ENCODE measurements at regions of chr11 and their contacts with region 1.

Region 1: DNA sequence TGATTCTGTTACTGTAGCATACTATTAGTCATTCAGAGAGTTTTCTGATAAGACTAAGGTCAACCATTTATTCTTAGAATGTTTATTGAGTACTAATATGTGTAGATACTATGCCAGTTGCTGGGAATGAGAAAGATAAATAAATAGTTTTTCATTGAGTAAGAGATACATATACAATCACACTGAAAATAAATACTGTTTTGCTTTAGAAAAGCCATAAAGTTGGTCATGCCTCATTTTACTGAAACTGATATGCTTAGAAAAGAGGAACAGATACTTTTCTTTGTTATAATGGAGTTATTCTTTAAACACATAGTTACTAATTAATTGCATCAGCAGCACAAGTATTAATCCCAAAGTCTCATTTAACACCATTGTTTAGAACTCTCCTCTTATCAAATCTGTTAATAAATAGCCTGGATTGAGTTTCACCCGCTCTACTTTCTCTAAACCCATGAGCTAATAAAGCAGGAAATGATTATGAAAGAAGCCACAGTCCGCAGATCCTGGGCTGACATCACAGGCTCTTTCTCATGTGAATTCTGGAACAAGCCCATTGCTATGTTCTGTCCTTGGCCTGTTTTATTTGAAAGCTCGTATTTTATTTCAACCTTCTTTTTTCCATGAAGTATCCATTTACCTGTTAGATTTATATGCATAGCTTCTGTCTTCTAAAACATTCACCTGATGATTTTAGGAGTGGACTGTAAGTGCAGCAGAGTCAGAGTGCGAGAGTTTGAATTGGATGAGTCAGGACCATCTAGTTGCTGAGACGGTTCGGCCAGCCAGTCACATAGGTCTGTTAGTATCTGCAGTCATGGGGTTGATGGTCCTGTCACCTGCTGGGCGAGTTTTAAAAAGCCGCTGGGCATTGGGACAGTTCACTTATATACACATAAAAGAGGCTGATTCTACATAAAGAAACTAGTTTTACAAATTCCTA is 35.5 kb downstream of the PIWIL4 start:
- DNase-seq: peak; percentile 12
- H3K4me3 Mint-ChIP-seq: no peak overlapping the region
- H3K27ac Mint-ChIP-seq: no peak overlapping the region
- H3K4me1 Mint-ChIP-seq: peaks cover 5% of the 10 kb centered on the region
- H3K27me3 Mint-ChIP-seq: peaks cover 3% of the 10 kb centered on the region

Region 2: DNA sequence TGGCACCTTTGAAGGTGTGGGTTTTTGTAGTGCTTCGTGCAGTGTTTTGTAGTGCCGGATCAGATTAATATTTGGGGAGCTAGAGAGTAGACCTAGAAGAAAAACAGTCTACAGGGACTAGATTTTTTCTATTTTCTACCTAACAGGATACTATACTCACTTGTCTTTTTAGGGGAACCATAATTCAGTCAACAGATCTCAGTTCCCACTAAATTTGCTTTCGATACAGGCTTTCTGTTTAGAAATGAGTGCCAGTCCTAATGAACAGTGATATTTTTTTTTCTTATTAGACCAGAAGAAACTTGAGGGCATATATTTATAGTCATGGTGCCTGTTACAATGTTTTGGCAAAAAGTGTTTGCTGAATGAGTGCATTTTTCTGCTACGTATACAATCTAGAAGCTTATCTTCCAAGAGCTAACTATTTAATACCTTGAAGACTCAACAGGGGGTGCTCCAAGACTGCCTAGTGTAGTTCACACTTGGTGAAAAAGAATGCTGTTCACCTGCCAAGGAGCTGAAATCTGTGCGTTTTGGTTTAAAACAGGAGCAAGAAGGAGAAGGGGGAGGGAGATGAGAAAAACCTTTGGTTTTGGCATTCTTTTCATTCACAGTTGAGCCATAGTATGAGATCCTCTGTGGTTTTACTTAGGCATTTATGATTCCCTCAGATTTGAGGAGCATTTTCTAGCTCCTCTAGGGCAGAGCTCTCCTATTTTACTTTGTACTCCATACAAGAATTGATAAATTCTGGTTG is 707.4 kb before region 1 on chr11:
- intact Hi-C with region 1: loop called (anchors 5 kb)
- DNase-seq: no peak
- H3K4me3 Mint-ChIP-seq: no peak overlapping the region
- H3K27ac Mint-ChIP-seq: no peak overlapping the region
- H3K4me1 Mint-ChIP-seq: no peaks in the 10 kb centered on the region
- H3K27me3 Mint-ChIP-seq: peaks cover 7% of the 10 kb centered on the region

Region 3: DNA sequence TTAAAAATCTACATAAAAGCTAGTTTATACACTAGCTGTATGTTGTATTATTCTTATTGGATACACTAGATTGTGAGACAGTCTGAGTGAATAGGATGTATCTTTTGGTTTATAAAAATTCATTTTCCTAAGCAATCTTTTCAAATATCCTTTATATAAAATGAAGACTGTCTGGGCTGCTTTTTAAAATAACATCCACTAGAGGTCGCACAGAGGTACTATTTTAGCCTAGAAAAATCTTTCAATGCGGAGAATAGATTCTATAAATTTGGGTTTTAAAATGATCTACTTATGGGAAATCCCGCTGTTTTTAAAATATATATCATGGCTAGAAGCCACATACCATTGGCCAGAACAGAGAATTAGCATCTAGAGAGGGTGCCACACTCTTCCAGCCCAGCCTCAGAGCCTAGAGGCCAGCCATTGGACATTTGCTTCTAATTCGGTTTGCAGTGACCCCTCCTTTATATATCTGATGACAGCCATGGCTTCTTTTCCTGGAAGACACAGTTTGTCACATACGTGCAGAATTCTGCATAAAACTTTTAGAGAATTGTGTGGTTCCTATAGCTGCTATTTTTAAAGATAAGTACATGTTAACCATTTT is 83.1 kb before region 1 on chr11:
- intact Hi-C with region 1: loop called (anchors 1 kb)
- DNase-seq: no peak
- H3K4me3 Mint-ChIP-seq: no peak overlapping the region
- H3K27ac Mint-ChIP-seq: no peak overlapping the region
- H3K4me1 Mint-ChIP-seq: no peaks in the 10 kb centered on the region
- H3K27me3 Mint-ChIP-seq: peaks cover 27% of the 10 kb centered on the region

Region 4: GRCh38 chr11:94563176-94563847 is 39.4 kb before region 1 on chr11:
- intact Hi-C with region 1: no loop called
- DNase-seq: no peak
- H3K4me3 Mint-ChIP-seq: no peak overlapping the region
- H3K27ac Mint-ChIP-seq: no peak overlapping the region
- H3K4me1 Mint-ChIP-seq: no peaks in the 10 kb centered on the region
- H3K27me3 Mint-ChIP-seq: no peaks in the 10 kb centered on the region

Region 5: DNA sequence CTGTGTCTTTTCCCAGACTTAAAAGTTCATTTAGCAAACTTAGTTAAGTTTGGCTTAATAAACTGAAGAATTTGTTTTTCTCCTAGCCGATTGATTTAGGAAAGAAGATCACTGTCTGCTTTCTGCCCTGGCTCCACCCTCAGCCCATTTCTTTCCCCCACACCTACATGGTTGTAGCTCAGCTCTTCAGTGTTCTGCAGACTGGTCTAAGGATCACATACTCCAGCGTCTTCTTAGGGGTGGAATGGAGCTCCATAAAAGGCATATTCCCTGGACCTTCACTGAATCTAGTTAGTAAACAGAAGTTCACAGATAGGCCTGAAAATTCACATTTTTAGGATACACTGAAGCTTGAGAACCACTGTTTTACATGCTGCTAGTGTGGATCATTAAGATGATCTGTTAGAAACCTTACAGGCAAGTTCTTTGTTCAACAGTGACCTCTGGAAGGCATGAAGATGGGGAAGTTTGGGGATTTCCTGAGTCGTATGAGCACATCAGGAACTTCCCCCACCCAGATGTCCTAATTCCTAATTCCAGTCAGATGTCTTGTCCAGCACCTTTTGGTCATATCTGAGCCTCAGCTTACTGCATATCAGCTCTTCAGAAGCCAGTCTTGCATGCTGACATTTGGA is 18.7 kb before region 1 on chr11:
- intact Hi-C with region 1: no loop called
- DNase-seq: no peak
- H3K4me3 Mint-ChIP-seq: no peak overlapping the region
- H3K27ac Mint-ChIP-seq: no peak overlapping the region
- H3K4me1 Mint-ChIP-seq: no peaks in the 10 kb centered on the region
- H3K27me3 Mint-ChIP-seq: no peaks in the 10 kb centered on the region

Measured in activated T-helper 1 cell treated with anti-CD3 and anti-CD28 coated beads, Interleukin-12 subunit alpha, Interleukin-12 subunit beta, Interleukin-2, Interleukin-4 antibody, amounts not matched to agents 30 ng/mL and 10 ng/mL and 1 ng/mL, durations not matched to agents 14 hours and 24 hours and 36 hours (primary cell).